H1 (cell line): ENCODE measurements at regions of chr9 and their contacts with region 1.

Region 1: DNA sequence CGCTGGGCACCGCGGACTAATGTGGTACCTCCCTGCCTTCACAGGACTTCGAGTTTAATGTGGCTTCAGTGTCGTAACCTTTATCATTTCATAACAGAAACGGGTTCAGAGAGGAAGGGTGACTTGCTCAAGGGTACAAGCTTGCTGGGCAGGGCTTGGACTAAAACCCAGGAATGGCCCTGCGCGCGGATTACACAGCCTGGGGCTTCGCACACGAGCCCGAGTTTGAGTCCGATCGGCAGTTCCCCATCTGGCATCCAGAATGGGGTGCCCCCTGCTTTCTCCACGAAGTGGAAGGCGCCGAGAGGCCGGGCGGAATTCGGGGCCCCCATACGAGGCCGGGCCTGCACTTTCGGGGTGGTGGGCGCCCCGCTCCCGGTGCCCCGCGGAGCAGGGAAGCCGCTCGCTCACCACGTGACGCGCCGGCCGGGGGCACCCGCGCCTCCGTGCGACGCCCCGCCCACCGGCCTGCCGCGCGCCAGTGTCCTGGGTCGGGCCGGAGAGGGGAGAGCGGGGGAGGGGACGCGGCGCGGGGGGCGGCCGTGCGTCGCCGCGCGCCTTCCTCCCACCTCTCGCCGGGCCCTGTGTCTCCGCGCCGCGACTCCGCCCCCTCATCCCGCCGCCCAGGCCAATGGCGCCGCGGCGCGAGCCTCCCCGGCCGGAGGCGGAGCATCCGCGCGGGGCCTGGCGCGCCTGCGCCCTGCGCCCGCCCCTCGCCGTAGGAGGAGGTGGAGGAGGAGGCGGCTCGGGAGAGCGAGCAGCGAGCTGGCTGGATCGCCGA is at the start of gene SET:
- DNase-seq: peak; percentile 80 to 92
- H3K4me3 ChIP-seq: peak within 1 kb of the TSS; percentile 82 to 96 (median 92)
- H3K27ac ChIP-seq: peak within 1 kb of the TSS; percentile 86
- H3K4me1 ChIP-seq: peaks cover 6 to 15% (median 8%) of the 10 kb centered on the region in 4 experiments; a peak in 6 of 7 replicates
- H3K27me3 ChIP-seq: no peaks in the 10 kb centered on the region
- CTCF ChIP-seq: no peak; a peak in 1 of 4 replicates
- EP300 ChIP-seq: peak in 1 of 2 experiments; percentile 3; a peak in 1 of 3 replicates
- POLR2A ChIP-seq: peak; percentile 84 to 91
- RAD21 ChIP-seq: no peak
- total RNA-seq, gene SET: 1,327 and 1,345 TPM in 2 replicates

Region 2: GRCh38 chr9:128635283-128636023 is 53.2 kb before region 1 on chr9:
- CTCF ChIA-PET with region 1: interaction called, 16 read pairs
- POLR2A ChIA-PET with region 1: interaction called, 313 read pairs
- DNase-seq: peak; percentile 81 to 90
- H3K4me3 ChIP-seq: no peak overlapping the region
- H3K27ac ChIP-seq: peak overlapping the region; percentile 34; the same call in 1 of the 2 replicates
- H3K4me1 ChIP-seq: peaks cover 0 to 14% (median 11%) of the 10 kb centered on the region in 4 experiments; a peak in 5 of 7 replicates
- H3K27me3 ChIP-seq: no peaks in the 10 kb centered on the region
- CTCF ChIP-seq: peak in 2 of 3 experiments; percentile 59 to 68; a peak in 3 of 4 replicates
- EP300 ChIP-seq: no peak
- POLR2A ChIP-seq: no peak
- RAD21 ChIP-seq: peak; percentile 60 to 71

Region 3: GRCh38 chr9:128643519-128644300 is 45.0 kb before region 1 on chr9:
- CTCF ChIA-PET with region 1: interaction called, 6 read pairs
- POLR2A ChIA-PET with region 1: interaction called, 313 read pairs
- DNase-seq: no peak
- H3K4me3 ChIP-seq: no peak overlapping the region
- H3K27ac ChIP-seq: no peak overlapping the region
- H3K4me1 ChIP-seq: no peaks in the 10 kb centered on the region
- H3K27me3 ChIP-seq: no peaks in the 10 kb centered on the region
- CTCF ChIP-seq: no peak
- EP300 ChIP-seq: no peak
- POLR2A ChIP-seq: no peak
- RAD21 ChIP-seq: no peak

Region 4: GRCh38 chr9:128656416-128657343 is 32.0 kb before region 1 on chr9 and contains the start of gene DYNC2I2:
- CTCF ChIA-PET with region 1: no interaction called
- POLR2A ChIA-PET with region 1: interaction called, 1,197 read pairs
- DNase-seq: peak; percentile 84 to 97
- H3K4me3 ChIP-seq: peak within 1 kb of the TSS; percentile 66 to 86 (median 68)
- H3K27ac ChIP-seq: peak within 1 kb of the TSS; percentile 100
- H3K4me1 ChIP-seq: no peaks in the 10 kb centered on the region; a peak in 2 of 7 replicates
- H3K27me3 ChIP-seq: no peaks in the 10 kb centered on the region
- CTCF ChIP-seq: no peak
- EP300 ChIP-seq: 0 out of 3 replicates have a peak, but pooled peaks of 1 of the 2 experiments have one; percentile 9
- POLR2A ChIP-seq: peak; percentile 82 to 87
- RAD21 ChIP-seq: peak in 1 of 2 experiments; percentile 17; a peak in 1 of 4 replicates
- total RNA-seq, gene DYNC2I2: 58.0 and 60.4 TPM in 2 replicates

Region 5: DNA sequence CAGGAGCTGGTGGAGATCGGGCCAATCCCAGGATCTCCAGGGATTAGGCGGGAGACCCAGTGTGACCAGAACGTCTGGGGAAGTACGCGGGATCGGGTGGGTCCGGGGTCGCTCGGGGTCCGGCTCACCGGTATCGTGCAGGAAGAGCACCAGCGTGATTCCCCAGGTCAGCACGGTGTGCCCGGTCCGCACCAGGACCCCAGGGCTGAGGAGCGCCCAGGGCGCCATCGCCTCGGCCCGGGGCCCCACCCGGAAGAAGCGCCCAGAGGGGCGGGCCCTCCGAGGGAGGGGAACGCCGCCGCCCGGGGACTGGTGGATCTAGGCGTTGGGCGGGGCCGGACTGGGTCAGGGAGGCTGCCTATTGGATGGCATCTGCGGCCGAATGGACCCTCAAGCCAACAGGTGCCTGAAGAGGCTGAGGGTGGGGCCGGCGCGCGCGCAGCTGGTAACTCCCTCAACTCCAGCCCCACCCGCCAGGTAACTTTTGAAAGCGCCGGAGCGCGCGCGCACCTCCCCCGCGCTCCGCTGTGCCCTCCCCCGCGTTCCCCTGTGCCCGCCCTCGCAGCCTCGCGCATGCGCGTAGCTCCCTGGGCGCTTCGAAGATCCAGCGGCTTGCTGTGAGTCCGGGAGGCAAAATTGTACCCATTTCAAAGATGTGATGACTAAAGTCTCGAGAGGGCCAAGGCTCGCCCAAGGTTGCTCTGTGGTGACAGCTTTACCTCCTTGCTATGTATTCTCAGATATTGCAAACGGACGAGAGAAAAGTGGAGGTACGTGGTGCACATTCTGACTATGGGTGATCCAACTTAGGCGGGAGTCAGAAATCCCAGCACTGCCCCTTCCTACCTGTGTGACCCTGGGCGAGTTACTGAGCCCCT is 35.4 kb after region 1 on chr9 and contains the start of gene ZDHHC12:
- CTCF ChIA-PET with region 1: no interaction called
- POLR2A ChIA-PET with region 1: interaction called, 52 read pairs
- DNase-seq: peak; percentile 98
- H3K4me3 ChIP-seq: peak within 1 kb of the TSS; percentile 73 to 92 (median 90)
- H3K27ac ChIP-seq: peak within 1 kb of the TSS; percentile 46
- H3K4me1 ChIP-seq: peaks cover 0 to 3% (median 0%) of the 10 kb centered on the region in 4 experiments; a peak in 3 of 7 replicates
- H3K27me3 ChIP-seq: no peaks in the 10 kb centered on the region
- CTCF ChIP-seq: no peak
- EP300 ChIP-seq: no peak
- POLR2A ChIP-seq: peak; percentile 62 to 94
- RAD21 ChIP-seq: no peak
- total RNA-seq, gene ZDHHC12: 32.8 and 35.0 TPM in 2 replicates